Sciatic nerve (tissue), 2 donors: ENCODE measurements at regions of chr1 and their contacts with region 1.

Region 1: GRCh38 chr1:39102537-39103327 is 76.6 kb downstream of the NDUFS5 start:
- DNase-seq: peak; percentile 67
- ATAC-seq: peak; percentile 61

Region 2: GRCh38 chr1:38873027-38873969 is 229.4 kb before region 1 on chr1 and contains the start of gene MYCBP:
- intact Hi-C with region 1: no loop called
- DNase-seq: peak; percentile 97
- ATAC-seq: peak; percentile 100
- total RNA-seq, gene MYCBP: 6.5 TPM

Region 3: GRCh38 chr1:39196244-39197215 is 93.8 kb after region 1 on chr1:
- intact Hi-C with region 1: loop called (anchors 10 kb)
- DNase-seq: no peak
- ATAC-seq: peak; percentile 34

Region 4: DNA sequence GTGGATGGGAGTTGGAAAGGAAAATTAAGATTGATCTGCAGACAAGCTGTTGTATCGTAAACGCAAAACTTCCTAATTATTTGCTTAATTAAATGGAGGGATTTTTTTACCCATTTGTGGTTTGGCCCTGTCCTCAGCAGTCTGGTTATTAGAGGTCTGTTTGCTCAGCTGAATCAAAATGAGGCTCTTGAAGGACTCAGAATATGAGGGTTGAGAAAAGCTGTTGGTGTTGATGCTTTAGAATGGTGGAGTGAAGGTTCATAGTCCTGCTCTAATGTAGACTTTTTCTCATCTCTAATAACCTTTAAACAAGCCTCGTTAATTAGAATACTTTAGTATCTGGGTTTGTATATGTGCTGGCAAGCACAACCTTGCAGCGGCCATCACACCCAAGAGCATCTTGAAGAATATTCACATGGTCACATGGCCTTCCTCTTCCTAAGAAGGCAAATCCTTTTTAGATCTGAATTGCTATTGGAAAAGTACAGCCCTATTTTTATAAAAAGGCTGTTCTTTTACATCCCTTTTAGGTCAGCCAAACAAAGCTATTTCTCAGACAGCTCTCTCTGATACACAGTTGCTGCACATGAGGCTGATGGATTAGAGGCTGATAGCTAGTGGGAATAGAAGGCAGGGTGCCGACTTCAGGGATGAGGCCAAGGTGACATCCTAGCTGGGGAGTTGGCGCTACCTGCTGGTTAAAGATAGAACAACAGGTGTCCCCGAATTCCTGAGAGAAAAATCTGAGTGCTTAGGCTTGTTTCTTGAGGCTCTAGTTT is 155.6 kb after region 1 on chr1:
- intact Hi-C with region 1: loop called (anchors 5 kb)
- DNase-seq: peak; percentile 82
- ATAC-seq: peak; percentile 89